Heart left ventricle (tissue), 16 donors: ENCODE measurements at regions of chr4 and their contacts with region 1.

Region 1: DNA sequence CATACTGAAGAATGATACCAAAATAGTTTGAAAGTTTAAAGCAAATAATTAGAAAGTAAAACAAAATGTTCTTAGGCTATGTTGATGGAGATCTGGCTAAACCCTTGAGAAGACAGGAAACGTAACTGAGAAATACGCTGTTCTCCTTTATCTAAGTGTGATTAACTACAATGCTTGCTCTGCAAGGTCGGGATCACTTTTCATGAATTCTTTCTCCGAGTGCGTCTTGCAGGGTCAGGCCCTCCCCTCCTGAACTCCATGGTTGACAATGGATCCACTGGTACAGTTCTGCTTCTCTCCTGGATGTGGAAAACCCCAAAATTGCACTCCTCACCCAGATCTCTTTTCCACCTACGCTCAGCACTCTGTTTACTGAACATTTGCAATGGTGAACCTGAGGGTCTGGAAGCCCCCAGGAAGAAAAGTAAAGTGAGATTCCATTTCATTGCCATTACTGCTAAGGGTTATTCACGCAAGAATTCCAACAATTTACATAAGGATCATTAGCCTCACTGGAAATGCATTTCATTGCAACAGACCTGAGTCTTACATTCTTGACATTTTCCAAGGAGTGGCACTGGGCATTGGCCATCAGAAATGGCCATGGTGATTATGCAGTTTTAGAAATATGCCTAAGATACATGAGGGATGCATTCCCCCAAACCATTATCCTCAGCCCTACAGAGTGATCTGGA is 24.6 kb upstream of the WWC2 start:
- DNase-seq: no peak
- ATAC-seq: no peak
- H3K4me3 ChIP-seq: no peak overlapping the region
- H3K27ac ChIP-seq: no peak overlapping the region
- H3K4me1 ChIP-seq: peaks cover 0 to 8% (median 0%) of the 10 kb centered on the region in 12 donors
- H3K27me3 ChIP-seq: no peaks in the 10 kb centered on the region
- CTCF ChIP-seq: no peak
- POLR2A ChIP-seq: no peak

Region 2: GRCh38 chr4:182929296-182929945 is 145.0 kb before region 1 on chr4:
- intact Hi-C with region 1: no loop called
- DNase-seq: no peak
- ATAC-seq: no peak
- H3K4me3 ChIP-seq: no peak overlapping the region
- H3K27ac ChIP-seq: no peak overlapping the region
- H3K4me1 ChIP-seq: no peaks in the 10 kb centered on the region
- H3K27me3 ChIP-seq: no peaks in the 10 kb centered on the region
- CTCF ChIP-seq: no peak
- POLR2A ChIP-seq: no peak

Region 3: GRCh38 chr4:183158062-183158461 is 83.6 kb after region 1 on chr4:
- intact Hi-C with region 1: no loop called
- DNase-seq: no peak
- ATAC-seq: no peak
- H3K4me3 ChIP-seq: no peak overlapping the region
- H3K27ac ChIP-seq: peak overlapping the region in 1 of 12 donors; percentile 27
- H3K4me1 ChIP-seq: peaks cover 0 to 31% (median 10%) of the 10 kb centered on the region in 12 donors
- H3K27me3 ChIP-seq: no peaks in the 10 kb centered on the region
- CTCF ChIP-seq: no peak
- POLR2A ChIP-seq: no peak

Region 4: GRCh38 chr4:183229397-183229796 is 155.0 kb after region 1 on chr4:
- intact Hi-C with region 1: no loop called
- DNase-seq: no peak
- ATAC-seq: no peak
- H3K4me3 ChIP-seq: no peak overlapping the region
- H3K27ac ChIP-seq: no peak overlapping the region
- H3K4me1 ChIP-seq: no peaks in the 10 kb centered on the region
- H3K27me3 ChIP-seq: no peaks in the 10 kb centered on the region
- CTCF ChIP-seq: no peak
- POLR2A ChIP-seq: no peak

Region 5: DNA sequence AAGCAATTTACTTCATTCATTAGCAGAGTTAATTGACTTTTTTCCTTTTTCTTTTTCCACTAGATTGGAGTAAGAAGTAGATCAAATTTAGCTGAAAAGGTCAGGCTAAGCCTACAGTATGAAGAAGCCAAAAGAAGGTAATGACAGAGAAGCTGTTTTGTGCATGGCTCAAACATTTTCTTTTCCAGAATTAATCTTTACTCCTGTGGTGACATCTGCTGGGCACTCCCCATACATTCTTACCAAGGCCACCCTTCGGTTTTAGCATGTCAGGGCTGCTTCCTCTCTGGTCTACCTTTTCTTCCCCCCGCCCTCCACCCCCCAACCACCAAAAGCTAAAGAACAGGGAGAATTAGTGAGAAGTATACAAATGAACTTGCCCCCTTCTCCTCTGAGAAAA is 175.4 kb after region 1 on chr4:
- intact Hi-C with region 1: loop called in 1 of 10 experiments (anchors 2 kb)
- DNase-seq: no peak
- ATAC-seq: peak in 3 of 4 donors; percentile 67 to 73 (median 67)
- H3K4me3 ChIP-seq: no peak overlapping the region
- H3K27ac ChIP-seq: no peak overlapping the region
- H3K4me1 ChIP-seq: no peaks in the 10 kb centered on the region
- H3K27me3 ChIP-seq: no peaks in the 10 kb centered on the region
- CTCF ChIP-seq: peak in 10 of 12 donors; percentile 7 to 58 (median 44)
- POLR2A ChIP-seq: no peak

Region 6: DNA sequence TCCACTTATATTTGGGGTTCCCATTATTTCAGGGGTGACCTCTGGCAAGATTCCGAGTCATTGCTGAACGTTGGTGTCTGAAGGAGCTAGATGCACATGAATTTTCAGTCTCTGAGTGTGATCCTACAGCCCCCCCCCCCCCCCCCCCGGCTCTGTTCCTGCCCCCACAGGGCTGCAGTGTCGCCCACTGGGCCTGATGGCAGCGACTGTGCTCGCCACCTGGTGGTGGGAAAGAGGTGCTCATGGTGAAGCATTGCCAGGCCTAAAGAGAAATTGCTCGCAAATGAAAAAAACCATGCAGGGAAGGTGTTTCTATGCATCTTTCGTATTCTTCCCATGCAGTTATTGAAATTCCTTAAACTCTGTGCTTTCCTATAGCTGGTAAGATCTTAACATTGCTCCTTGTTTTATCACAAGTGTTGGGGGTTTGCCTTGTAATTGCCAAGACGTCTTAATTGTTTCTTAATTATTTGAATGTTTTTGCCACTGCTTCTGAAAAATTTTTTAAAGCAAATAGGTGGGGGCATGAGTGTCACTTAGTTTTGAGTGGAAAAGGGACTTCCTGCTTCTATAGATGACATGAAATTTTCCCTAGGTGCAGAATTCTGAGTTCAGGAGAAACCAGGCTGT is 182.4 kb after region 1 on chr4:
- intact Hi-C with region 1: loop called (anchors 1 to 5 kb)
- DNase-seq: peak; percentile 41 to 68 (median 53)
- ATAC-seq: peak in 3 of 4 donors; percentile 70 to 84 (median 78)
- H3K4me3 ChIP-seq: no peak overlapping the region
- H3K27ac ChIP-seq: peak overlapping the region in 1 of 12 donors; percentile 19
- H3K4me1 ChIP-seq: peaks cover 0 to 13% (median 0%) of the 10 kb centered on the region in 12 donors
- H3K27me3 ChIP-seq: no peaks in the 10 kb centered on the region
- CTCF ChIP-seq: peak; percentile 60 to 85 (median 70)
- POLR2A ChIP-seq: no peak

Region 7: DNA sequence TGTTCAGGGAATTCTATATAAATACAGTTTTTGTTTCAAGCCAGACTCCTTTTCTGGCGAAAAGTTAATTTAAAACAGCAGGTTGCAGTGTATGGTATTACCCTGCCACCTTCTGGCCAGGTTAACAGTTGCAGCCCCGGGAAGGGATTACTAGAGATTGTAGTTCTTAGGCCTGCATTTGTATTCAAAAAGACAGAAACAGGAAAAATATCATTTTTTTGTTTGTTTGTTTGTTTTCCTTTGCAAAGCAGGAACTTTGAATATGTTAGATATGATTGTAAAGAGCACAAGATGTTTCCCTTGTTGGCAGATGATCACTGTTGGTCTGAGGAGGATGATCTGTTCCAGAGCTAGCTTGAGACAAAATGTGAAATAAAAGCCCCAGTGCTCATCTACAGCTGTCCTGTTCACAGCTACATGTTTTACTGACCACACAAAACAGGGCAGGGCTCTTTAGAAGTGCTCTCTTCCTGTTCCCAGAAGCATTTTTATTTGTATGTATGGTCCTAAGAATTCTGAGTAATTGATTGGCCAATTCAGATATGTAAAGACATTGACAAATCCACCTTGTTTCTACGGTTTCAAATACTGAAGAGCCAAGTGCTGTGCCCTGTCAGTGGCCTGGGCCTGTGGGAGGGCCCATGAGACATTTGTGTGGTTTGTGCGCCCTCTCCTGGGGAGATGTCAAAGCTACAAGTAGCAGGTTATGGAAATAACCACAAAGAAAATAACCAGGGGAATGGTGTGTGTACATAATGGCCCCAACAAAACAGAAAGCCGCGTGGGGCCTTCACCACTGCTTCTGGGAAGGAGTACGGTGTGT is 187.7 kb after region 1 on chr4:
- intact Hi-C with region 1: loop called (anchors 1 to 5 kb)
- DNase-seq: peak; percentile 74 to 80 (median 77)
- ATAC-seq: peak; percentile 82 to 96 (median 93)
- H3K4me3 ChIP-seq: no peak overlapping the region
- H3K27ac ChIP-seq: peak overlapping the region in 6 of 12 donors; percentile 3 to 55 (median 36)
- H3K4me1 ChIP-seq: peaks cover 0 to 10% (median 4%) of the 10 kb centered on the region in 12 donors
- H3K27me3 ChIP-seq: no peaks in the 10 kb centered on the region
- CTCF ChIP-seq: peak; percentile 68 to 81 (median 72)
- POLR2A ChIP-seq: no peak

Region 8: DNA sequence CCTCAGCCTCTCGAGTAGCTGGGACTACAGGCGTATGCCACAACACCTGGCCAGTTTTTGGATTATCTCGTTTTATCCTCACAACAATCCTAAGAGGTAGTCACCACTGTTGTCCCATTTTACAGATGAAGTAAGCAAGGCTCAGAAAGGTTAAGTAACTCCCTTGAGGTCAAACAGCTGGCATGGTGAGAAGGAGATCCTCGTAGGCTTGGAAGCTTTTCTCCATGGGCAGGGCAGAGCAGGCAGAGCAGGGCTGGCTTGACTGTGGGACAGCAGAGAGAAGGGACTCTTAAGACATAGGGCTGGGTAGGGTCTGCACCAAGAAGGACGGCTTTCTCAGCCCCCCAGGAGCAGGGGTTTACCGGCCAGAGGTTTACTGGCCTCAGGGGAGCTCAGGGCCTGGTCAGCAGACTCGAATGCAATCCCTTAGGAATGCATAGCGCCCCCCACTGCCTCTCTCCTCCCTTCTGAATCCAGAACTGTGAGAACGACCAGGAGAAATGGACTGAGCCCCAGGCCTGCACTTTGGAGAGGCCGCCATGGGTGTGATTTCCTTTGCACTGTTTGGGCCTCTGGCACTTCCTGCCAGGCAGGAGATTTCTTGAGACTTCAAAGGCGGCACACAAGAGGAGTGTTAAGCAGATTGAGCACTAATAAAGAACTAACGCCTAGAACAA is 356.0 kb after region 1 on chr4:
- intact Hi-C with region 1: no loop called
- DNase-seq: no peak
- ATAC-seq: peak in 3 of 4 donors; percentile 45 to 72 (median 60)
- H3K4me3 ChIP-seq: no peak overlapping the region
- H3K27ac ChIP-seq: peak overlapping the region in 5 of 12 donors; percentile 7 to 40 (median 36)
- H3K4me1 ChIP-seq: peaks cover 0 to 11% (median 0%) of the 10 kb centered on the region in 12 donors
- H3K27me3 ChIP-seq: no peaks in the 10 kb centered on the region
- CTCF ChIP-seq: peak in 1 of 12 donors; percentile 3
- POLR2A ChIP-seq: no peak